ENCODE measurements at regions of chr19 and their contacts with region 1.

Region 1: GRCh38 chr19:50357178-50358100 is 8.0 kb downstream of the NAPSA start:
- DNase-seq: peak; percentile 91
- H3K4me3 Mint-ChIP-seq: peak overlapping the region; percentile 82
- H3K27ac Mint-ChIP-seq: peak overlapping the region; percentile 92
- H3K4me1 Mint-ChIP-seq: peaks cover 45% of the 10 kb centered on the region
- H3K27me3 Mint-ChIP-seq: no peaks in the 10 kb centered on the region

Region 2: GRCh38 chr19:50329146-50329925 is 28.1 kb before region 1 on chr19 and contains the start of gene KCNC3:
- CTCF ChIA-PET with region 1: interaction called, 10 read pairs
- intact Hi-C with region 1: loop called (anchors 2 kb)
- DNase-seq: peak; percentile 98
- H3K4me3 Mint-ChIP-seq: peak within 1 kb of the TSS; percentile 82
- H3K27ac Mint-ChIP-seq: peak within 1 kb of the TSS; percentile 83
- H3K4me1 Mint-ChIP-seq: peaks cover 65% of the 10 kb centered on the region
- H3K27me3 Mint-ChIP-seq: peaks cover 45% of the 10 kb centered on the region
- total RNA-seq, gene KCNC3: 2.0 to 2.4 TPM

Region 3: DNA sequence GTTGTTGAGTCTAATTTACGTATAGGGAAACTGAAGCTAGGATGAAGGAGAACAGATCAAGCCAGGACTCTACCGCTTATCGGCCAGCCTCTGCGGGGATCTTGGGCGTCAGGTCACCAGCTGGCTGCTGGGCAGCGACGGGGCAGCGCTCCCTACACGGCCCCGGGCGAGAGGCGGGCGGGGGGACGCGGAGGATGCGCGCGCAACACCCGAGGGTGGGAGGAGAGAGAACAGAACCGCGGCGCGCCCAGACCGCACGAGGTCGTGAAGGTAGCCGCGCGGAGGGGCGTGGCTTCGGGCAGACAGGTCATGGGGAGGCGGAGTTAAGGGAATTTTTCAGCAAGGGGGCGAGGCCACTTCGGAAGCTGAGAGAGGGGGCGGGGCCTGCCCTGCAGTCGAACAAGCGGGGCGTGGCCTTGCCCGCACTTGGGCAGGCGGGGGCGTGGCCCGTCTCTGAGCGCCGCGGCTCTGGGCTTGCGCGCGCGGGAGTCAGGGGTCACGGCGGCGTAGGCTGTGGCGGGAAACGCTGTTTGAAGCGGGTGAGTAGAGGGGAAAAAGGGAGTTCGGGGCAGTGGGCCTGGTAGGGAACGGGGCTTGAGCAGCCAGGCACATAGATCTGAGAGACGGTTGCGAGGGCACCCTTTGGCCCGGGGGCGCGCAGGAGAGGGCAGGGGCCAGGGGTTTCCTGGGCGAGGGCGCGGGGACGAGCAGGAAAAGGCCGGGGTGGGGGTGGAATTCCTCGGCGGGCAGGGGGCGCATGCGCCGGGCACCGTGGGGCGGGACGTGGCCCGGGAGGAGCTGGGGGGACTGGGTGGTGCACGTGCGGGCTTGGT is 26.6 kb after region 1 on chr19 and contains the start of gene POLD1:
- CTCF ChIA-PET with region 1: interaction called, 4 read pairs
- intact Hi-C with region 1: loop called (anchors 1 kb)
- DNase-seq: peak; percentile 99
- H3K4me3 Mint-ChIP-seq: peak within 1 kb of the TSS; percentile 98
- H3K27ac Mint-ChIP-seq: peak within 1 kb of the TSS; percentile 95
- H3K4me1 Mint-ChIP-seq: peaks cover 36% of the 10 kb centered on the region
- H3K27me3 Mint-ChIP-seq: no peaks in the 10 kb centered on the region
- total RNA-seq, gene POLD1: 221 to 224 TPM

Region 4: DNA sequence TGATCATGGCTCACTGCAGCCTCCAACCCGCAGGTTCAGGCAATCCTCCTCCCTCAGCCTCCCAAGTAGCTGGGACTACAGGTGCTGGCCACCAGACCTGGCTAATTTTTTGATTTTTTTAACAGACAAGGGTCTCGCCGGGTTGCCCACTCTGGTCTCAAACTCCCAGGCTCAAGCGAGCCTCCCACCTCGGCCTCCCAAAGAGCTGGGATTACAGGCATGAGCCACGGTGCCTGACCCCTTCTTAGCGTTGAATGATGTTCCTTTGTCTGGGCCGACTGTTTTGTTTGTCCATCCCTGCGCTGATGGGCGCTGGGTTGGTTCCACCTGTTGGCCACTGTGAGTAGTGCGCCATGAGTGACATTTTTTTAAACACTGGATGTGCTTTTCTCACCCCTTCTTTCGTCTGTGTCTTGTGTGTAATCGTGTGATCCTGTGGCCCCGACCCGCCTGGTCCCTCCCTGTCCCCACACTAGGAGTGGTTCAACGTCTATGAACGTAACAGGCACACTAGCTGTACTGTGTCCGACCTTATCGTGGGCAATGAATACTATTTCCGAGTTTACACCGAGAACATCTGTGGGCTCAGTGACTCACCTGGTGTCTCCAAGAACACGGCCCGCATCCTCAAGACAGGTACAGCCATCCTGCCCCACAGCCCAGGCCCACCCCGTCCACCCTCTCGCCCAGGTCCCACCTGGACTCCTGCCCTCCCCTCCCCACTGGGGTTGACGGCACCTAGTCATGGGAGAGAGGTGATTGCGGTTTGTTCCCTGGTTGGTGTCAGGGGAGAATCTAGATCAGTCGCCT is 103.8 kb after region 1 on chr19:
- CTCF ChIA-PET with region 1: interaction called, 11 read pairs
- intact Hi-C with region 1: loop called (anchors 1 kb)
- DNase-seq: peak; percentile 78
- H3K4me3 Mint-ChIP-seq: no peak overlapping the region
- H3K27ac Mint-ChIP-seq: no peak overlapping the region
- H3K4me1 Mint-ChIP-seq: peaks cover 15% of the 10 kb centered on the region
- H3K27me3 Mint-ChIP-seq: peaks cover 33% of the 10 kb centered on the region

Region 5: GRCh38 chr19:50556282-50557008 is 199.0 kb after region 1 on chr19:
- CTCF ChIA-PET with region 1: interaction called, 3 read pairs
- intact Hi-C with region 1: loop called (anchors 1 kb)
- DNase-seq: peak; percentile 88
- H3K4me3 Mint-ChIP-seq: peak overlapping the region; percentile 84
- H3K27ac Mint-ChIP-seq: no peak overlapping the region
- H3K4me1 Mint-ChIP-seq: peaks cover 9% of the 10 kb centered on the region
- H3K27me3 Mint-ChIP-seq: peaks cover 57% of the 10 kb centered on the region

Region 6: DNA sequence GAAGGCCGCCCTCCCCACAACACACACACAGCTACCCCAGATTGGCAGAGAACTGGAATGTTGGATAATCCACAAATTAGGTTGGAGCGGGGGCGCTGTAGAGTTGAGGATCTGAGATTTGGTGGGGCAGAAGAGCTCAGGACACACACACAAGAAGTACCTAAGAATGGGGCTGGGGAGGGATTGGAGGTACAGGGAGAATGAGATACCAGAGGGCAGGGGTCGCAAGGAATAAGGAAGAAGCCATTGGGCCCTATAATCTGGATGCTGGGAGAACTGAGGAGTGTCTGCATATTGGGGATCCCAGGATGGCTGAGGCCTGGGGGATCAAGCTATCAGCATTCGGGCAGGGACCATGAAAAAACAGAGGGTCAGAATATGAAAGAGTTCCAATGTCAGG is 270.7 kb after region 1 on chr19:
- CTCF ChIA-PET with region 1: no interaction called
- intact Hi-C with region 1: no loop called
- DNase-seq: no peak
- H3K4me3 Mint-ChIP-seq: no peak overlapping the region
- H3K27ac Mint-ChIP-seq: no peak overlapping the region
- H3K4me1 Mint-ChIP-seq: no peaks in the 10 kb centered on the region
- H3K27me3 Mint-ChIP-seq: peaks cover 11% of the 10 kb centered on the region

Measured in activated naive CD4-positive, alpha-beta T cell treated with anti-CD3 and anti-CD28 coated beads for 36 hours (primary cell).